CD8-positive, alpha-beta memory T cell (primary cell): ENCODE measurements at regions of chr14 and their contacts with region 1.

Region 1: GRCh38 chr14:61475316-61475715 is 153.9 kb downstream of the PRKCH start:
- DNase-seq: peak in 1 of 5 donors; percentile 41
- H3K4me3 ChIP-seq: no peak overlapping the region
- H3K4me3 Mint-ChIP-seq: peak overlapping the region in 6 of 7 donors; percentile 12 to 46 (median 34)
- H3K27ac ChIP-seq: no peak overlapping the region
- H3K27ac Mint-ChIP-seq: peak overlapping the region; percentile 87 to 100 (median 96)
- H3K4me1 ChIP-seq: peaks cover 96% of the 10 kb centered on the region
- H3K4me1 Mint-ChIP-seq: peaks cover 93 to 98% (median 97%) of the 10 kb centered on the region in 3 donors
- H3K27me3 ChIP-seq: no peaks in the 10 kb centered on the region
- H3K27me3 Mint-ChIP-seq: peaks cover 0 to 9% of the 10 kb centered on the region in 2 donors

Region 2: GRCh38 chr14:61403411-61403810 is 71.9 kb before region 1 on chr14:
- CTCF ChIA-PET with region 1: no interaction called
- POLR2A ChIA-PET with region 1: interaction called, 10 read pairs
- DNase-seq: peak in 2 of 5 donors; percentile 60 to 64
- H3K4me3 ChIP-seq: no peak overlapping the region
- H3K4me3 Mint-ChIP-seq: peak overlapping the region; percentile 15 to 76 (median 69)
- H3K27ac ChIP-seq: no peak overlapping the region
- H3K27ac Mint-ChIP-seq: peak overlapping the region; percentile 36 to 95 (median 90)
- H3K4me1 ChIP-seq: peaks cover 89% of the 10 kb centered on the region
- H3K4me1 Mint-ChIP-seq: peaks cover 40 to 89% (median 56%) of the 10 kb centered on the region in 3 donors
- H3K27me3 ChIP-seq: no peaks in the 10 kb centered on the region
- H3K27me3 Mint-ChIP-seq: no peaks in the 10 kb centered on the region

Region 3: GRCh38 chr14:61461808-61462275 is 13.5 kb before region 1 on chr14:
- CTCF ChIA-PET with region 1: interaction called, 11 read pairs
- POLR2A ChIA-PET with region 1: no interaction called
- DNase-seq: peak in 3 of 5 donors; percentile 26 to 72 (median 57)
- H3K4me3 ChIP-seq: no peak overlapping the region
- H3K4me3 Mint-ChIP-seq: peak overlapping the region in 3 of 7 donors; percentile 18 to 54 (median 52)
- H3K27ac ChIP-seq: no peak overlapping the region
- H3K27ac Mint-ChIP-seq: peak overlapping the region; percentile 75 to 95 (median 90)
- H3K4me1 ChIP-seq: peaks cover 22% of the 10 kb centered on the region
- H3K4me1 Mint-ChIP-seq: peaks cover 63 to 94% (median 66%) of the 10 kb centered on the region in 3 donors
- H3K27me3 ChIP-seq: no peaks in the 10 kb centered on the region
- H3K27me3 Mint-ChIP-seq: peaks cover 0 to 7% of the 10 kb centered on the region in 2 donors

Region 4: DNA sequence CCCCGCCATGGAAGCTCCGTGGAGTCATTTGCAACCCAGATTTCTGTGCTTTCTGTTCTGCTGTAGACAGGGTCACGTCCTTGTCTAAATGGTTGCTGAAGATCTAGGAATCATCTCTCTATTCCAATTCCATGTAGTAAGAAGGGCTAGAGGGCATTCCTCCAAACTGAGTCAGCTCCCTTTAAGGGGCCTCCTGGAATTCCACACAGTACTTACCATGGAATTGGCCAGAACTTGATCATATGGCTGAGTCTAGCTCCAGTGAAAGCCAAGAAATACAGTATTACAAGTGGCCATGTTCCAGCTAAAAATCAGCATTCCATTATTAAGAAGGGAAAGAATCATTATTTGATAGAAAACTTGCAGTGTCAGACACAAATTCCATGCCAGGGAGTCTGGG is 17.9 kb after region 1 on chr14:
- CTCF ChIA-PET with region 1: interaction called, 10 read pairs
- POLR2A ChIA-PET with region 1: interaction called, 3 read pairs
- DNase-seq: no peak
- H3K4me3 ChIP-seq: no peak overlapping the region
- H3K4me3 Mint-ChIP-seq: no peak overlapping the region
- H3K27ac ChIP-seq: no peak overlapping the region
- H3K27ac Mint-ChIP-seq: no peak overlapping the region
- H3K4me1 ChIP-seq: peaks cover 48% of the 10 kb centered on the region
- H3K4me1 Mint-ChIP-seq: peaks cover 19 to 46% (median 28%) of the 10 kb centered on the region in 3 donors
- H3K27me3 ChIP-seq: no peaks in the 10 kb centered on the region
- H3K27me3 Mint-ChIP-seq: no peaks in the 10 kb centered on the region

Region 5: GRCh38 chr14:61503167-61503801 is 28.0 kb after region 1 on chr14:
- CTCF ChIA-PET with region 1: interaction called, 19 read pairs
- POLR2A ChIA-PET with region 1: interaction called, 10 read pairs
- DNase-seq: peak; percentile 38 to 79 (median 74)
- H3K4me3 ChIP-seq: peak overlapping the region; percentile 8
- H3K4me3 Mint-ChIP-seq: peak overlapping the region; percentile 22 to 89 (median 74)
- H3K27ac ChIP-seq: peak overlapping the region; percentile 2
- H3K27ac Mint-ChIP-seq: peak overlapping the region in 7 of 8 donors; percentile 86 to 100 (median 96)
- H3K4me1 ChIP-seq: peaks cover 91% of the 10 kb centered on the region
- H3K4me1 Mint-ChIP-seq: peaks cover 92 to 100% (median 99%) of the 10 kb centered on the region in 3 donors
- H3K27me3 ChIP-seq: no peaks in the 10 kb centered on the region
- H3K27me3 Mint-ChIP-seq: no peaks in the 10 kb centered on the region

Region 6: GRCh38 chr14:61641914-61642613 is 166.7 kb after region 1 on chr14:
- CTCF ChIA-PET with region 1: no interaction called
- POLR2A ChIA-PET with region 1: no interaction called
- DNase-seq: no peak
- H3K4me3 ChIP-seq: no peak overlapping the region
- H3K4me3 Mint-ChIP-seq: no peak overlapping the region
- H3K27ac ChIP-seq: no peak overlapping the region
- H3K27ac Mint-ChIP-seq: no peak overlapping the region
- H3K4me1 ChIP-seq: no peaks in the 10 kb centered on the region
- H3K4me1 Mint-ChIP-seq: peaks cover 0 to 4% (median 0%) of the 10 kb centered on the region in 3 donors
- H3K27me3 ChIP-seq: no peaks in the 10 kb centered on the region
- H3K27me3 Mint-ChIP-seq: no peaks in the 10 kb centered on the region

Region 7: GRCh38 chr14:61837336-61838229 is 362.3 kb after region 1 on chr14:
- CTCF ChIA-PET with region 1: interaction called, 12 read pairs
- POLR2A ChIA-PET with region 1: no interaction called
- DNase-seq: peak; percentile 55 to 81 (median 60)
- H3K4me3 ChIP-seq: no peak overlapping the region
- H3K4me3 Mint-ChIP-seq: no peak overlapping the region
- H3K27ac ChIP-seq: no peak overlapping the region
- H3K27ac Mint-ChIP-seq: no peak overlapping the region
- H3K4me1 ChIP-seq: no peaks in the 10 kb centered on the region
- H3K4me1 Mint-ChIP-seq: peaks cover 0 to 4% (median 0%) of the 10 kb centered on the region in 3 donors
- H3K27me3 ChIP-seq: no peaks in the 10 kb centered on the region
- H3K27me3 Mint-ChIP-seq: peaks cover 9 to 24% of the 10 kb centered on the region in 2 donors